Breast epithelium (tissue), 4 donors: ENCODE measurements at regions of chr4 and their contacts with region 1.

Region 1: DNA sequence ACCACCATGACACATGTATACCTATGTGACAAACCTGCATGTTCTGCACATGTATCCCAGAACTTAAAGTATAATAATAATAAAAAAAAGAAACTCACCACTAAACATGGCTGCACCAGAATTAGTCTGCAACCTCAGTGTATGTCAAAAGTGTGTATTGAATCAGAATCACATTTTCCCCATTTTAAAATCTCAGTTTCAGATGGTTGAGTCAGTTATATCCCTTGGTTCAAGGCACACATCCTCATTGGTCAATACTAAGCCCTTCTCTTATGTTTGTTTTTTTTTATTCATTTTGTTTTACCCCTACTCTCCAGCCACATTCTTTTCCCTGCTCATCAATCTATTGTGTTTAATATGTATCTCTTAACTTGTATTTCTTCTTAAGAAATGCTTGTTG is 57.8 kb upstream of the ANXA3 start:
- DNase-seq: no peak
- H3K4me3 ChIP-seq: no peak overlapping the region
- H3K27ac ChIP-seq: no peak overlapping the region
- H3K4me1 ChIP-seq: no peaks in the 10 kb centered on the region
- H3K27me3 ChIP-seq: no peaks in the 10 kb centered on the region
- CTCF ChIP-seq: no peak
- POLR2A ChIP-seq: no peak

Region 2: GRCh38 chr4:78565971-78566372 is 72.2 kb after region 1 on chr4:
- intact Hi-C with region 1: loop called (anchors 2 kb)
- DNase-seq: no peak
- H3K4me3 ChIP-seq: no peak overlapping the region
- H3K27ac ChIP-seq: peak overlapping the region in 1 of 2 donors; percentile 66
- H3K4me1 ChIP-seq: peaks cover 0 to 3% of the 10 kb centered on the region in 2 donors
- H3K27me3 ChIP-seq: no peaks in the 10 kb centered on the region
- CTCF ChIP-seq: no peak
- POLR2A ChIP-seq: no peak

Region 3: DNA sequence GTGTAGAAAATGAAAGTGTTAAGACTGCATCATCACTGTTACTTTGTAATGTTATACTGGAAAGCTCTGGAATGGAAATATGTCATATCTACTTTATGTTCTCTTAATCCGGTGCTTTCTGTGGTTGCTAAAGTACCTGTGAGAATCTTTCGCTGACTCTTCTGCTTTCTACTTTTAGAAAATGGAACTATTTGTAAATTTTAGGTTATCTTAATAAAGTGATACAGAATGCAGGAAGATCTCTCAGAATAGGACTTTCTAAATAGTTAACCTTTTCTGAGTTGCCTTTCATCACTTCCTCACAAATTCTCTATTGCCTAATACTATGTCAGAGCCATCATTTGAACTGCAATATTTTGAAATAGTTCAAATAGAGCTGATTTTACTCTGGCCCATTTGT is 351.7 kb after region 1 on chr4:
- intact Hi-C with region 1: no loop called
- DNase-seq: no peak
- H3K4me3 ChIP-seq: no peak overlapping the region
- H3K27ac ChIP-seq: no peak overlapping the region
- H3K4me1 ChIP-seq: no peaks in the 10 kb centered on the region
- H3K27me3 ChIP-seq: no peaks in the 10 kb centered on the region
- CTCF ChIP-seq: no peak
- POLR2A ChIP-seq: no peak